Endothelial cell of umbilical vein (primary cell): ENCODE measurements at regions of chr7 and their contacts with region 1.

Region 1: DNA sequence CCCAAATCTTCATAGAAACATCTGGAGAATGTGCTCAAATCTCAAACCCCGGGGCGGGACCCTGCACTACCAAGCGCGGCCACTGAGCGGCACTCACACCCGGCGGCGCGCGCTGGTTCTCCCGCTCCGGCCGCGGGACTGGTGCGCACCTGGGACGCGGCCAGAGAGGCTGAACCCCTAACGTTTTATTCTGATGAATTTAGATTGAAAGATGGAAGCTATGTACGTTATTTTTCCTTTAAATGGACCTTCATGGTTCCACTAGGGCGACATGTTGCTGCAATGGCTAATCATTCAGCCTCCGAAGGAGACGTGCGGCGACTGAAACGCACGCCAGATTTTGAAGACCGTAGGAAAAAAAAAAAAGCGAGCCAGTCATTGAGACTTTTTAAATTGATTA is 107.0 kb upstream of the INSIG1 start:
- DNase-seq: peak; percentile 20
- H3K4me3 ChIP-seq: no peak overlapping the region
- H3K27ac ChIP-seq: no peak overlapping the region
- H3K4me1 ChIP-seq: no peaks in the 10 kb centered on the region
- H3K27me3 ChIP-seq: peaks cover under 1 to 6% of the 10 kb centered on the region in 2 experiments
- CTCF ChIP-seq: peak; percentile 83 to 94
- POLR2A ChIP-seq: no peak

Region 2: DNA sequence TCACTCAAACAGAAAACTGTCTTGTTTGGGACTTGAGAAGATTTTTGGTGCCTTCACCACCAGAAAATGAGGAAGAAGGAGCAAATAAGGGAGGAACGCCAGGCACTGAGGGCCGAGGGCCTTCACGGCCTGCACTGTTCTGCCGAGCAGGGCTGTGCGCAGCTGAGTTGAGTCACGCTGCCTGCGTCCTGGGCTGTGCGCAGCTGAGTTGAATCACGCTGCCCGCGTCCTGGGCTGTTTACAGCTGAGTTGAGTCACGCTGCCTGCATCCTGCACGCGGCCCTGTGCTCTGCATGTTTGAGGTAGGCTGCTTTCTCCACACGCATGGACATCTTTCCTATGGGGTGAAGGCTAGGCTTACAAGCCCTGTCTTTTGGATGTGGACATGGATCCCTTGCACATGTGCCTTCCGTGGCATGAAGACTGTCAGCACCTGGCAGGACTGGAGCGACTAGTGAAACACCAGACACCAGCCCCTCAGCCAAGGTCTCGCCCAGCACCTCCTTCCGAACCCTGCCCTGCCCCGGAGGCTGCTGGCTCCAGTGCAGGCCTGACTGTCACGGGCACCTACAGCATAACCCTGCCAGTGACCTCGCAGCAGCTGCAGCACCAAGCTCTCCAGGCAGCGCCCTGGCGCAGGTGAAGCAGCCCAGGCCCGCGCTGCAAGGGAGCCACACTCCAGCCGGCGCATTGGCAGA is 23.9 kb before region 1 on chr7:
- CTCF ChIA-PET with region 1: interaction called, 3 read pairs
- POLR2A ChIA-PET with region 1: no interaction called
- dilution Hi-C with region 1: no loop called
- intact Hi-C with region 1: loop called (anchors 1 kb)
- DNase-seq: peak; percentile 84
- H3K4me3 ChIP-seq: no peak overlapping the region
- H3K27ac ChIP-seq: no peak overlapping the region
- H3K4me1 ChIP-seq: no peaks in the 10 kb centered on the region
- H3K27me3 ChIP-seq: no peaks in the 10 kb centered on the region
- CTCF ChIP-seq: no peak
- POLR2A ChIP-seq: no peak

Region 3: GRCh38 chr7:155222573-155222972 is 31.9 kb after region 1 on chr7:
- CTCF ChIA-PET with region 1: no interaction called
- POLR2A ChIA-PET with region 1: no interaction called
- dilution Hi-C with region 1: no loop called
- intact Hi-C with region 1: no loop called
- DNase-seq: no peak
- H3K4me3 ChIP-seq: no peak overlapping the region
- H3K27ac ChIP-seq: no peak overlapping the region
- H3K4me1 ChIP-seq: no peaks in the 10 kb centered on the region
- H3K27me3 ChIP-seq: no peaks in the 10 kb centered on the region
- CTCF ChIP-seq: no peak
- POLR2A ChIP-seq: no peak

Region 4: DNA sequence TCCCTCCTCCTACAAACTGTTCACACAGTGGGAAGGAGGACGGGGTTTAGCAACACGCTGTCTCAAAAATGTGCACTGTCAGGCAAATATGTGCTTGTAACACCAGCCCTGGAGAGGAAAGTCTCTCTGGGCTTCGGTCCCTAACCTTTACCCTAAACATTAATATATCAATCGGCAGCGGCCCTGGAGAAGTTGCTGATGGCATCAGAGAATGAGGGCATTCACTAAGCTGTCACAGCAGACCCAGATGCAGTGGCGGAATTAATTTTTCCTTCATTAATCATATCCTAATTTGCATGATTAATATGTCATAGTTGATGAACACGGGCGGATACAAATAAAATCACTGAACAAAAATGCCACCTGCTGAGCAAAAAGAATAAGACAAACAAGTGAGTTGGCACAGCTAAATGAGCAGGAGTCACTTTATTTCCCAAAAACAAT is 61.8 kb after region 1 on chr7:
- CTCF ChIA-PET with region 1: interaction called, 11 read pairs
- POLR2A ChIA-PET with region 1: no interaction called
- dilution Hi-C with region 1: no loop called
- intact Hi-C with region 1: loop called (anchors 1 kb)
- DNase-seq: peak; percentile 18
- H3K4me3 ChIP-seq: no peak overlapping the region
- H3K27ac ChIP-seq: no peak overlapping the region
- H3K4me1 ChIP-seq: peaks cover 7% of the 10 kb centered on the region
- H3K27me3 ChIP-seq: no peaks in the 10 kb centered on the region
- CTCF ChIP-seq: no peak
- POLR2A ChIP-seq: no peak

Region 5: DNA sequence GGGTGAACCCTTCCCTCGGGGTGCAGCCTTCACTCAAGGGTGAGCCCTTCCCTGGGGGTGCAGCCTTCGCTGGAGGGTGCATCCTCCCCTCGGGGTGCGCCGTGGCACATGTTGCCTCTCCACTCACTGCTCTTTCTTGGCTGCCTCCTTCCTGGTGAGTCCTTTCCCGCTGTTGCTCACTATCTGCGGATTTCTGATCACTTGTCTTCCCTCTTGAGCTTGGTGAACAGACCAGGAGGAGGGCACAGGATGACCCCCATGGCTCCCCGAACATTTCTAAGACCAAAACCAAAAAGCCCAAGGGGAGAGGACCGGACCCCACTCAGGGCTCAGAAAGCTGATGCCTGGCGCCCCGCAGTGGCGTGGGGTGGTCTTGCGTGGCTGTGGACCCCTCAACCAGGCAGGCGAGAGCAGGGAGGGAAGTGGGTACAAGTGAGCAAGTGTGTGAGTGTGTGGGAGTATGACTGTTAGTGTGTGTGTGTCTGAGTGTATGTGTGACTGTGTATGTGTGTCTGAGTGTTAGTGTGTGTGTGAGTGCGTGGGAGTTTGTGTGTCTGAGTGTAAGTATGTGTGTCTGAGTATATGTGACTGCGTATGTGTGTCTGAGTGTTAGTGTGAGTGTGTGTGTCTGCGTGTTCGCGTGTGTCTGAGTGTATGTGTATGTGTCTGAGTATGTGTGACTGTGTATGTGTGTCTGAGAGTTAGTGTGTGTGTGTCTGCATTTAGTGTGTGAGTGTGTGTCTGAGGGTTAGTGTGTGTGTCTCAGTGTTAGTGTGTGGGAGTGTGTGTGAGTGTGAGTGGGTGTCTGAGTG is 72.8 kb after region 1 on chr7:
- CTCF ChIA-PET with region 1: interaction called, 4 read pairs
- POLR2A ChIA-PET with region 1: no interaction called
- dilution Hi-C with region 1: no loop called
- intact Hi-C with region 1: loop called (anchors 1 kb)
- DNase-seq: no peak
- H3K4me3 ChIP-seq: no peak overlapping the region
- H3K27ac ChIP-seq: no peak overlapping the region
- H3K4me1 ChIP-seq: no peaks in the 10 kb centered on the region
- H3K27me3 ChIP-seq: no peaks in the 10 kb centered on the region
- CTCF ChIP-seq: peak; percentile 11 to 30
- POLR2A ChIP-seq: no peak

Region 6: DNA sequence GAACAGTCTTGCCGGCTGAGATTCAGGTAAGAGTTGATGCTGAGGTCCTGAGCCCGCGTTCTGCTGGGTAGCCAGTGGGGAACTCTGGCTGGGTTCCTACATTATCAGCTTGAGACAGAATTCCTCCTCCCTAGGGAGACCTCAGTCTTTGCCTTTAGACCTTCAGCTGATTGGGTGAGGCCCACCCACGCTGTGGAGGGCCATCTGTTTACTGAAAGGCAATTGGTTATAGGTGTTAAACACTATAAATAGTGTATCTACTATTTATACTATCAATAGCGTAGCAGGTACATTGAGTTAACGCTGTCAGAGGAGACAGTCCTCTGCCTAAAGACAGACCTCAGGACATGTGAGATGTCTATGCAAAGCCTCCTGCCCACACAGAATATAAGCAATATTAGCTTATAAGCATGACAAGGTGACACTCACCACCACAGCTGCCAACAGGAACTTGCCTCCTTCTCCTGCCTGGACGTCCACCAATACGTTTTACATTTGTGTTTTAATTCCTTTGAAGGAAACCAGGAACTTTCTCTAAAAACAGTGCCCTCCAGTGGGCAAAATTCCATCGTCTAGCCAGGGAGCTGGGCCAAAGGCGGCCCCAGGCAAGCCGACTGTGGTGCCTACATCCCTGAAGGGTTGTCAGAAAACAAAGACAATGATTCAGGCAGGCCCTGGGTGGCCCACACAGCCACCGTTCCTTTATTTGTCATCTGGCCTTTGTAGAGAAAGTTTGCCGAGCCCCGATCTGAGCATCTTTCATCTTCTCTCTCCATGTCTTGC is 165.8 kb after region 1 on chr7:
- CTCF ChIA-PET with region 1: interaction called, 13 read pairs
- POLR2A ChIA-PET with region 1: no interaction called
- dilution Hi-C with region 1: no loop called
- intact Hi-C with region 1: no loop called
- DNase-seq: peak; percentile 30
- H3K4me3 ChIP-seq: no peak overlapping the region
- H3K27ac ChIP-seq: no peak overlapping the region
- H3K4me1 ChIP-seq: no peaks in the 10 kb centered on the region
- H3K27me3 ChIP-seq: peaks cover 0 to 3% of the 10 kb centered on the region in 2 experiments
- CTCF ChIP-seq: peak; percentile 43 to 44
- POLR2A ChIP-seq: no peak